ENCODE measurements at regions of chr20 and their contacts with region 1.

Region 1: DNA sequence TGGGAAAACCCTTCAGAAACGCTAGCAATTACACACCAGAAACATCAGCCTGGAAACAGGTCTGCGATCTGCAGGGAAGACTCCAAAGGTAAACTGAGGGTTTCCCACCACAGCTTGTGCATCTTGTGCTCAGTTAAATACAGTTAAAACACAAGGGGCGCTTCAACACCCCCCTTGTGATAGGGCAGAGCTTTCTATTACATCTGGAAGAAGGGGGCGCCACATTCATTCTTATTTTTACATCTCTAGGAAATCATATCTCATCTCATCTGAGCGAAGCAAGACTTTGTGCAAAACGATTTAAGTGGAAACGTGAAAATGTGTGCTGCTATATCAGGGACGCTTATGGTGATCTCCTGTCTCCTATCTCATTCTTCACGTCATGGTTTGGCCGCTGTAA is 58.5 kb downstream of the PRND start:
- DNase-seq: peak in 3 of 5 donors; percentile 16 to 25 (median 23)
- H3K4me3 ChIP-seq: no peak overlapping the region
- H3K4me3 Mint-ChIP-seq: no peak overlapping the region
- H3K27ac ChIP-seq: no peak overlapping the region
- H3K27ac Mint-ChIP-seq: peak overlapping the region in 6 of 7 donors; percentile 9 to 85 (median 56)
- H3K4me1 ChIP-seq: no peaks in the 10 kb centered on the region
- H3K4me1 Mint-ChIP-seq: peaks cover 5 to 11% (median 8%) of the 10 kb centered on the region in 4 donors
- H3K27me3 ChIP-seq: no peaks in the 10 kb centered on the region
- H3K27me3 Mint-ChIP-seq: no peaks in the 10 kb centered on the region

Region 2: DNA sequence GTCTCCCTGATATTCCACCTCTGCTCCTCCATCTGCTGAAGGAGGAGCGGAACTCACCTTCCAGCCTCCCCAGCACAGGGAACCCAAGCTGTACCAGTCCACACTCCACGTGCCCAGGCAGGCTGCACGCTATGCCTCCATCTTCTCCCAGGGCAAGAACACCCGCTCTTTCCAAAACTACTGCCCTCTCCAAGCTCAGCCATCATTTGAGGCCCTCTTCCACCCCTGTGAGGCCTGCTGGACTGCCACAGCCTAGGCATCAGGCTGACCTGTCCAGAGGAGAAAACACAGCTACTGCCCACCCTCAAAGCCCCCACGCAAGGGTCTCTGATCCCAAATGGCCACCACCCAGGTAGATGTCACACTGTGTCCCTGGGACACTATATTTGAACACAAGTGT is 41.3 kb after region 1 on chr20:
- CTCF ChIA-PET with region 1: no interaction called
- POLR2A ChIA-PET with region 1: no interaction called
- intact Hi-C with region 1: no loop called
- DNase-seq: no peak
- H3K4me3 ChIP-seq: peak overlapping the region; percentile 57 to 68
- H3K4me3 Mint-ChIP-seq: peak overlapping the region; percentile 12 to 95 (median 92)
- H3K27ac ChIP-seq: peak overlapping the region; percentile 80
- H3K27ac Mint-ChIP-seq: peak overlapping the region; percentile 60 to 95 (median 83)
- H3K4me1 ChIP-seq: peaks cover 52% of the 10 kb centered on the region
- H3K4me1 Mint-ChIP-seq: peaks cover 35 to 55% (median 45%) of the 10 kb centered on the region in 4 donors
- H3K27me3 ChIP-seq: no peaks in the 10 kb centered on the region
- H3K27me3 Mint-ChIP-seq: no peaks in the 10 kb centered on the region

Region 3: GRCh38 chr20:4949833-4950178 is 169.6 kb after region 1 on chr20:
- CTCF ChIA-PET with region 1: interaction called, 21 read pairs
- POLR2A ChIA-PET with region 1: no interaction called
- intact Hi-C with region 1: no loop called
- DNase-seq: peak; percentile 32 to 53 (median 42)
- H3K4me3 ChIP-seq: peak overlapping the region in 1 of 2 donors; percentile 20
- H3K4me3 Mint-ChIP-seq: peak overlapping the region; percentile 70 to 84 (median 79)
- H3K27ac ChIP-seq: no peak overlapping the region
- H3K27ac Mint-ChIP-seq: peak overlapping the region; percentile 8 to 94 (median 47)
- H3K4me1 ChIP-seq: peaks cover 6% of the 10 kb centered on the region
- H3K4me1 Mint-ChIP-seq: peaks cover 8 to 26% (median 14%) of the 10 kb centered on the region in 4 donors
- H3K27me3 ChIP-seq: no peaks in the 10 kb centered on the region
- H3K27me3 Mint-ChIP-seq: no peaks in the 10 kb centered on the region

Measured in CD4-positive, alpha-beta memory T cell (primary cell).